ENCODE measurements at regions of chr4 and their contacts with region 1.

Region 1: GRCh38 chr4:10204401-10205058 is 87.9 kb upstream of the WDR1 start:
- DNase-seq: peak in 2 of 3 donors; percentile 46 to 61
- ATAC-seq: peak in 1 of 2 donors; percentile 53
- H3K4me3 ChIP-seq: no peak overlapping the region
- H3K27ac ChIP-seq: no peak overlapping the region
- H3K4me1 ChIP-seq: no peaks in the 10 kb centered on the region
- H3K27me3 ChIP-seq: no peaks in the 10 kb centered on the region

Region 2: DNA sequence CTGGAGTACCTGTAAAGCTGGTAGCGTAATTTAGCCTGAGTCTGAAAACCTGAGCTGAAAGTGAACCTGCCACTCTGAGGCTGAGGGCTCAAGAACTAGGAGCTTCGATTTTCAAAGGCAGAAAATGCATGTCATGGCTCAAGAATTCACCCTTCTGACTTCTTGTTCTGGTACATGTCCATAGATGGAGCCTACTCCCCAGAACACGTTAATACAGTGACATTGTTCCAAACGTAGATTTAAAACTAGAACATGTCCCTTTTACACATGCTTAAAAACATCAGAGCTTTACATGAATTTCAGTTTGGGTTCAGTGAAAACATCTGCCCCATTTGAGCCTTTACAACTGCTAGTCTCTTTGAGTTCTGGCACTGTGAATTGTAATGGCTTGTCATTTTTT is 27.6 kb after region 1 on chr4:
- intact Hi-C with region 1: loop called in 3 of 4 experiments (anchors 1 to 2 kb)
- DNase-seq: no peak
- ATAC-seq: no peak
- H3K4me3 ChIP-seq: no peak overlapping the region
- H3K27ac ChIP-seq: no peak overlapping the region
- H3K4me1 ChIP-seq: no peaks in the 10 kb centered on the region
- H3K27me3 ChIP-seq: no peaks in the 10 kb centered on the region

Region 3: GRCh38 chr4:10239982-10240654 is 35.6 kb after region 1 on chr4:
- intact Hi-C with region 1: loop called in 2 of 4 experiments (anchors 1 to 2 kb)
- DNase-seq: no peak
- ATAC-seq: peak in 1 of 2 donors; percentile 65
- H3K4me3 ChIP-seq: no peak overlapping the region
- H3K27ac ChIP-seq: no peak overlapping the region
- H3K4me1 ChIP-seq: no peaks in the 10 kb centered on the region
- H3K27me3 ChIP-seq: no peaks in the 10 kb centered on the region

Region 4: GRCh38 chr4:10346023-10346422 is 141.5 kb after region 1 on chr4:
- intact Hi-C with region 1: no loop called
- DNase-seq: no peak
- ATAC-seq: no peak
- H3K4me3 ChIP-seq: no peak overlapping the region
- H3K27ac ChIP-seq: no peak overlapping the region
- H3K4me1 ChIP-seq: no peaks in the 10 kb centered on the region
- H3K27me3 ChIP-seq: no peaks in the 10 kb centered on the region